ENCODE measurements at regions of chr13 and their contacts with region 1.

Region 1: DNA sequence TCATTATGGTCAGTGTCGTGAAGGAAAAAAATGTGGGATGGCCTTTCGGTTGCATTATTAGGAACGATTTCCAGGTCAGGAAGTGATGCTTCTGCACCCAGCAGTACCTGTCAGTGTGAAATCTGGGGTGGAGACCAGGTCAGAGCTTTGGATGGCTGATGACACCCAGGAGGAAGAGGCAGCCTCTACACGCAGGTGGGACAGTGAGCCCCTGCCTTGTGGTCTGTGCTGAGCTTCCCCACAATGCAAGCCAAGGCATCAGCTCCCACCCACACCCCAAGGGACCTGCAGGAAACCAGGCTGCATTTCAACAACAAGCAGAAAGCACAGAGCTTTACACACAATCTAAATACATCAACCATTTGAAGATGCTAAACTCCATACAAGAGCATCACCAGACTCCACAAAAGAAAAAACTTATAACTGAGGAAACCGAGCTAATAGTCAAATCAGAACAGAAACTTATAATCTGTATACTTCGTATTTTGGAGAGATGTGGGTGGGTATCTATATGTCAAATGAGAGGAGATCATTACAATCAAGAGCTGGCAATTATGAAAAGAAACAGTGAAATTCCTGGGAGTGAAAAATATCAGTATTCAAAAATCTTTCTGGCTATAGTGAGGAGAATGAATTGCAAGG is 130.1 kb downstream of the ZDHHC20 start:
- DNase-seq: no peak
- H3K4me3 Mint-ChIP-seq: peak overlapping the region; percentile 15
- H3K27ac Mint-ChIP-seq: peak overlapping the region; percentile 15
- H3K4me1 Mint-ChIP-seq: peaks cover 41% of the 10 kb centered on the region
- H3K27me3 Mint-ChIP-seq: no peaks in the 10 kb centered on the region

Region 2: DNA sequence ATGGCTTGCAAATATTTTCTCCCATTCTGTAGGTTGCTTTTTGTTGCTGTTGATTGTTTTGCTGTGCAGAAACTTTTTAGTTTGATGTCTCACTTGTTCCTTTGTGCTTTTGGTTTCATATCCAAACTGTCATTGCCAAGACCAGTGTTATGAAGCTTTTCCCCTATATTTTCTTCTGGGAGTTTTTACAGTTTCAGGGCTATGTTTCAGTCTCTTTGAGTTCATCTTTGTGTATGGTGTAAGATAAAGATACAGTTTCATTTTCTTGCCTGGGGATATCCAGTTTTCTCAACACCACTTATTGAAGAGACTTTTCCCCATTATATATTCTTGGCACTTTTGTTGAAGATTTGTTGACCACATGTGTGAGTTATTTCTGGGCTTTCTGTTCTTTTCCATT is 12.6 kb before region 1 on chr13:
- intact Hi-C with region 1: loop called (anchors 1 kb)
- DNase-seq: no peak
- H3K4me3 Mint-ChIP-seq: peak overlapping the region; percentile 40
- H3K27ac Mint-ChIP-seq: peak overlapping the region; percentile 83
- H3K4me1 Mint-ChIP-seq: peaks cover 11% of the 10 kb centered on the region
- H3K27me3 Mint-ChIP-seq: no peaks in the 10 kb centered on the region